Activated CD4-positive, alpha-beta memory T cell treated with anti-CD3 and anti-CD28 coated beads for 36 hours (primary cell): ENCODE measurements at regions of chr1 and their contacts with region 1.

Region 1: DNA sequence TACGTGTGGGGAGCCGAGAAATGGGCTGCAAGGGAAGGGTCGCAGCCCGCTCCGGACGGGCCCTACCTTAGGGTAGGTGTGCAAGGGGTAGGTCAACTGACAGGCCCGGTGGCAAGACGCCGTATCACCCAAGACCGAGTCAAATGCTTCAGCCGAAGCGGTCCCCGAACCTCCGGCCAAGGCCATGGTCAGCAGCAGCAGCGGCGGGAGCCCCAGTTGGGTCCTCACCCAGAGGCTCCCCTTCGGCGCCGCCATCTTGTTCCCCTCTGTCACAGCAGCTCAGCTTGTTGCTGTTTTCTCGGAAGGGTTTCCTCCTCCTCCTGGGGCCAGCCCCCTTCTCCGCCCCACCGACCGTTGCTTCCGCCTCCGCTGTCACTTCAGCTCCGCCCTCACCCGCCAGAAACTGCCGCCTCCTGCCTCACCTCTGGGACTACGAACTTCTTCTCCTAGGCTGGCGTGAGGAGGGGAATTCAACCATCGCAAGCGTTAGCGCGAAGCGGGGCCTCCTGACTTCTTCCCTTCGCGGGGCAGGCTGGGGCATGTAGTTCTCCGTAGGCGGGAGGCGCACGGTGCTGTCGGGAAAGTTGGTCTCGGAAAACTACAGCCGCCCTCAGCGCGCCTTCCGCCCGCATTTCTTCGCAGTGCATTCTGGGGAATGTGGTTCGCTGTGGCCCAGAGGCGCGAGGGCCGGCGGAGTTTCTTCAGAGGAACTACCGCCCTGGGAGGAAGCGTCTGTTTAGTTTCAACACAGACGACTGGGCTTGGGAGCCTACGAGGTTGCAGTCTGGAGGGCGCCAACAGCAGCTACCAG is at the starts of genes TCEANC2 and TMEM59:
- DNase-seq: peak; percentile 99
- H3K4me3 Mint-ChIP-seq: no peak within 1 kb of the TSS
- H3K27ac Mint-ChIP-seq: no peak within 1 kb of the TSS
- H3K4me1 Mint-ChIP-seq: peaks cover 30% of the 10 kb centered on the region
- H3K27me3 Mint-ChIP-seq: no peaks in the 10 kb centered on the region
- total RNA-seq, gene TCEANC2: 12.8 to 13.6 TPM
- total RNA-seq, gene TMEM59: 142 to 149 TPM

Region 2: DNA sequence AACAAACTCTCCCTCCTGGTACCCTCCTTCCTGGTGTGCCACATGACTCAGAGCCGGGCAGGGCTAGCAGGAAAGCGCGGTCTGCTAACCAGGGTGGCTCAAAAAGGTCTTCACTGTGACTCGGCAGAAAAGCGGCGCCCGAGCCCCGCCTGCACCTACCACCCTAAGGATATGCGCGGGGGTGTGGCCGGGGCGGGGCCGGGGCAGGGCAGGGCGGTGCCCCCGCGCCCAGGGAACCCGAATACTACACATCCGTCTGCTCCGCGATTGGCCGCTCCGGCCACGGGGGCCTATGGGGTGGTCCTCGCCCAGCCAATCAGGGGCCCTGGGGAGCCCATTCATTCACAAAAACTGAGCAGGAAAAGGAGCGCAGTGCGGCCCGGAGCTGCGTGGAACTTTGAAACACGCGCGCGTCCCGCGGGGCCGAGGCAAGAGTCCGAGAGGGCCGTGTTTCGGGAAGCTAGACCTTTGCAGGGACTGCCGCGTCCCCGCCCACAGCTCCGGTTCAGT is 727.0 kb before region 1 on chr1:
- CTCF ChIA-PET with region 1: no interaction called
- POLR2A ChIA-PET with region 1: no interaction called
- intact Hi-C with region 1: loop called (anchors 2 kb)
- DNase-seq: peak; percentile 98
- H3K4me3 Mint-ChIP-seq: peak overlapping the region; percentile 95
- H3K27ac Mint-ChIP-seq: peak overlapping the region; percentile 97
- H3K4me1 Mint-ChIP-seq: peaks cover 23% of the 10 kb centered on the region
- H3K27me3 Mint-ChIP-seq: no peaks in the 10 kb centered on the region

Region 3: DNA sequence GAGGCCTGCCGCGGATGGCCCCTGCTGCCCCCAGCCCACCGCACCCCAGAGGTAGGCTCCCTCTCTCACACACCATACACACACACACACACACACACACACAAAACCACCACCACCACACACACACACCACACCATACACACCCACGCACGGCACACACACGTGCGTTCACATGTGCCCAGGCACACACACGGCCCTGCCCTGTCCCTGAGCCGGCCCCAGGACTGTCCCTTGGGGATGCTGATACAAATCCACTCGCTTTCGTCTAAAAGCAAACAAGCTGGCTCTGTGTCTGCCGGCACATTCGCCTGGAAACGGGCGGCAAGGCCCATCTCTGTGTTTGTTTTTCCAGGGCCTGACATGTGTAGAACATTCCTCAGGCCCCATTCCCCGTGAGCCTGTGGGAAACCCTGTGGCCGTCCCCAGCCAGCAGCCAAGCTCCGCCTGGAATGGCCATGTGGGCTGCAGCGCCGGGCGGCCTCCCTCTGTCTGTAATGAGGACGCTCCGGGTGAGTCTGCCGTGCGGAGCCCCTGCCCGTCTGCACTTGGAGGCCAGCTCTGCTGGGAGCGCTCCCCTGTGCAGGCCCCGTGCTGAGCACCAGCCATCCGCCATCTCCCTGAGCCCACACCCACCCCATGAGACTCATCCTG is 526.6 kb before region 1 on chr1:
- CTCF ChIA-PET with region 1: no interaction called
- POLR2A ChIA-PET with region 1: no interaction called
- intact Hi-C with region 1: no loop called
- DNase-seq: no peak
- H3K4me3 Mint-ChIP-seq: no peak overlapping the region
- H3K27ac Mint-ChIP-seq: no peak overlapping the region
- H3K4me1 Mint-ChIP-seq: no peaks in the 10 kb centered on the region
- H3K27me3 Mint-ChIP-seq: peaks cover 4% of the 10 kb centered on the region

Region 4: GRCh38 chr1:53889304-53890298 is 163.5 kb before region 1 on chr1 and contains the start of gene YIPF1:
- CTCF ChIA-PET with region 1: no interaction called
- POLR2A ChIA-PET with region 1: no interaction called
- intact Hi-C with region 1: loop called (anchors 1 kb)
- DNase-seq: peak; percentile 93
- H3K4me3 Mint-ChIP-seq: peak within 1 kb of the TSS; percentile 96
- H3K27ac Mint-ChIP-seq: peak within 1 kb of the TSS; percentile 99
- H3K4me1 Mint-ChIP-seq: peaks cover 29% of the 10 kb centered on the region
- H3K27me3 Mint-ChIP-seq: no peaks in the 10 kb centered on the region
- total RNA-seq, gene YIPF1: 17.3 to 19.1 TPM

Region 5: GRCh38 chr1:54081306-54082270 is 28.4 kb after region 1 on chr1:
- CTCF ChIA-PET with region 1: interaction called, 12 read pairs
- POLR2A ChIA-PET with region 1: no interaction called
- intact Hi-C with region 1: no loop called
- DNase-seq: peak; percentile 77
- H3K4me3 Mint-ChIP-seq: no peak overlapping the region
- H3K27ac Mint-ChIP-seq: no peak overlapping the region
- H3K4me1 Mint-ChIP-seq: peaks cover 5% of the 10 kb centered on the region
- H3K27me3 Mint-ChIP-seq: no peaks in the 10 kb centered on the region

Region 6: DNA sequence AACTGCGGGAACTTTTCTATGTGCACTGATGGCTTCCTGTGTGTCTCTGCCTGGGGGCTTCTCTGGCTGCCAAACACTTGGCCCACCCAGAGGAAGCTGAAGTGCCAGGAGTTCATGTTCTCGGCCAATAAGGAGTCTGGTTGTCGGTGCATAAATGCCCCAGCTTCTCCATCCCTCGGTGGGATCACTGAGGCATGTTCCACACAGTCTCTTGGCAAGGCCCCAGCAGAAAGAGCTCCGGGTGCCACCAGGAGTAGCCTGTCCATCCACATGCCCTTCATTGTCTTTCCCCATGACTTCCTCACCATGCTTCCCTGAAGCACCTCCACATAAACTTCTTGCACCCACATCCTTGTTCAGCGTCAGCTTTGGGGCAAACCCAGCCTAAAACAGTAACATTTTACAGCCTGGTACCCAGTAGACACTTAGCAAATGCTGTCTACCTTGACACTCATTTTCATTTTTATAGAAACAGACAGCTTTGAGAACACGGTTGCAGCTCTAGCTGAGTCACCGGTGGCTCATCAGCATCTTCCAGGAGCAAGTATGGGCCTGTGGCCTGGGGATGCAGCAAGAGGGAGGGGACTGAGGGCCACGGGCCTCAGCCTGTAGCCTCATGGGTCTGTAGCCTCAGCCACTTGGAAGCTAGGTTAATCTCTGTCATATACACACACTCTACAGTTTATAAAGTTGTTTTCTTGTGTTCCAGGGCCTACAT is 114.4 kb after region 1 on chr1:
- CTCF ChIA-PET with region 1: no interaction called
- POLR2A ChIA-PET with region 1: no interaction called
- intact Hi-C with region 1: no loop called
- DNase-seq: no peak
- H3K4me3 Mint-ChIP-seq: no peak overlapping the region
- H3K27ac Mint-ChIP-seq: no peak overlapping the region
- H3K4me1 Mint-ChIP-seq: peaks cover 11% of the 10 kb centered on the region
- H3K27me3 Mint-ChIP-seq: no peaks in the 10 kb centered on the region

Region 7: DNA sequence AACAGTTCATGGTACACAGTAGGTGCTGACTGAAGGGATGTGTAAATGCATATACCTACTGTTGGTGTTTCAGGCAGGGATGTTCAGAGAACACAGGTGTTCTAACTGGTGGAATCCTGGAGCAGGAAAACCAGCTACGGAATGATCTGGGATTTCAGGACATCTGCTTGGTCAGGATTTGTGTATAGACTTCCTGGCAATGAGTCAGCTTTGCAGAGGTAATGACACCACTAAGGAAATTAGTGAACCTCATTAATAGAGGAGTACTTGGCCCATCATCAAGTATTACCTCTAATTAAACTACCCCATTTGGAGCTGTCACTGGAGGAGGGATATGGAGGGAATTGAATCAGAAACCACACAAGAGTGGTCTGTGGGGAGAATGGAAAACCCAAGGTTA is 154.1 kb after region 1 on chr1:
- CTCF ChIA-PET with region 1: no interaction called
- POLR2A ChIA-PET with region 1: no interaction called
- intact Hi-C with region 1: no loop called
- DNase-seq: no peak
- H3K4me3 Mint-ChIP-seq: no peak overlapping the region
- H3K27ac Mint-ChIP-seq: no peak overlapping the region
- H3K4me1 Mint-ChIP-seq: peaks cover 5% of the 10 kb centered on the region
- H3K27me3 Mint-ChIP-seq: no peaks in the 10 kb centered on the region

Region 8: DNA sequence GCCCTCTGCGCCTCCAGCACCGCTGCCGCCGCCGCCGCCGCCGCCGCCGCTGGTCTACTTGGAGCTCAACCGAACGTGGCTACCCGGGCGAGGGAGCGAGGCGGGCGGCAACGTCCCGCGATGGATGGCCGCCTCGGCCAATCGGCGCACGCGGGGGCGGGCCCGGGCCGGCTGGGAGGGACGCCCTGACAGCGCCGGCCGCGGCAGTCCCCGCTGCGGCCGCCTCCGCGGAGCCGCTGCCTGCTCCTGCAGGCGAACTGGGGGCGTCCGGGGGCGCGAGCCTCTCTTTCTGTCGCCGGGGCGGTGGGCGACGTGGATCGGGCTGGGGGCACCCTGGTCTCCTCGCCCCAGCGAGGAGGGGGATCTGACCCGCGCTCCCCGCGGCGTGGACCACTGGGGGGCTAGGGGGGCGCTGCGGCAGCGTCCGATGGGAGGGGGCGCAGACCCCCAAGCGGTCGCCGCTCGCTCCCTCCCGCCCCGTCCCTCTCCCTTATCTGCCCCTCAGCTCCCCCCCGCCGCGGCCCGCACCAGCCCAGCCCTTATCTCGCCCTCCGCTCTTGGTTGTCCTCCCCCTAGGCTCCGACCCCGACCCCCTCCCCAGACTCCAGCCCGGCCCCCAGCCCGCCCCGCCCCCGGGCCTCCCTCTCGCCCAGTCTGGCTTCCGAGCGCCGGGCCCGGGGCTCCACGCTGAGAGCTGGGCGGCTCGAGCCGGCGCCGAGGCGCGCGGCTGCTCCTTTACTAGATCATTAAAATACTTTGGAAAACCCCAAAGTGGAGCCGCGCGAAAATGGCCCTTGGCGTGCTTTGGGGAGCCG is 353.4 kb after region 1 on chr1 and contains the start of gene SSBP3:
- CTCF ChIA-PET with region 1: no interaction called
- POLR2A ChIA-PET with region 1: interaction called, 4 read pairs
- intact Hi-C with region 1: loop called (anchors 1 kb)
- DNase-seq: peak; percentile 93
- H3K4me3 Mint-ChIP-seq: peak within 1 kb of the TSS; percentile 84
- H3K27ac Mint-ChIP-seq: peak within 1 kb of the TSS; percentile 92
- H3K4me1 Mint-ChIP-seq: peaks cover 63% of the 10 kb centered on the region
- H3K27me3 Mint-ChIP-seq: no peaks in the 10 kb centered on the region
- total RNA-seq, gene SSBP3: 44.4 to 49.6 TPM

Region 9: DNA sequence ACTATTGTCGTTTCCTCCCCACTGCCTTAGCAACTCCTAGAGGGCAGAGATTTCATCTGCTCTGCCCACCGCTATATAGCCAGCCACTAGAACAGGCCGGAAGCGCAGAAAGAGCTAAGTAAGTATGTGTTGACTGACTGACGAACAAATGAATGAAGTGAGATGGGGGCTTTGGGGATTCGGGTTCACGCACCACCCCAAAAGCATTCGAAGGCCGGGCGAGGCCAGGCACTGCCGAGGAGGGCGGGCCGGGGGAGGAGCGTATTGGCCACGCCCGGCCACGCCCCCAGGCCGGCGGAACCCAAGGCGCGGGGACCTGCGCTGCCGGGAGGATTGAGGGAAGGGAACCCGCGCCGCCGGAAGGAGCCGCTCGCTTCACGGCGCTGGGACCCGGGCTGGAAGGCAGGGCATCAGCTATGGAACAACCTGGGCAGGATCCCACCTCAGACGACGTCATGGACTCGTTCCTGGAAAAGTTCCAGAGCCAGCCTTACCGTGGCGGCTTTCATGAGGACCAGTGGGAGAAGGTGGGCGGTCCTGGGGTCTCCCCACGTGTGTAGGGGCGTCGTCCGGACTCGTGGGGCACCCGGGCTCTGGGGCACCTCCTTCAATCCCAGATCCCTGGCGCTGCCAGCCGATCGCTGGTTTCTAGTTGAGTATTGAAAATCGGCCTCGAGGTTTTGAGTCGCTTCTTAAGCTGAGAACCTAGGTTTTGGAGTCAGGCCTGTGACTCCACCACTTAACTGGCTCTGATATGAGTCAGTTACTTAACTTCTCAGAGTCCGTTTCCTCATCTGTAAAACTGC is 662.6 kb after region 1 on chr1 and contains the start of gene TTC4:
- CTCF ChIA-PET with region 1: no interaction called
- POLR2A ChIA-PET with region 1: interaction called, 4 read pairs
- intact Hi-C with region 1: loop called (anchors 1 kb)
- DNase-seq: peak; percentile 87
- H3K4me3 Mint-ChIP-seq: peak within 1 kb of the TSS; percentile 82
- H3K27ac Mint-ChIP-seq: peak within 1 kb of the TSS; percentile 92
- H3K4me1 Mint-ChIP-seq: peaks cover 30% of the 10 kb centered on the region
- H3K27me3 Mint-ChIP-seq: no peaks in the 10 kb centered on the region
- total RNA-seq, gene TTC4: 32.7 to 33.5 TPM

Region 10: GRCh38 chr1:54800899-54801759 is 748.0 kb after region 1 on chr1 and contains the start of gene TTC22:
- CTCF ChIA-PET with region 1: interaction called, 4 read pairs
- POLR2A ChIA-PET with region 1: no interaction called
- intact Hi-C with region 1: loop called (anchors 1 kb)
- DNase-seq: peak; percentile 86
- H3K4me3 Mint-ChIP-seq: peak within 1 kb of the TSS; percentile 84
- H3K27ac Mint-ChIP-seq: peak within 1 kb of the TSS; percentile 67
- H3K4me1 Mint-ChIP-seq: peaks cover 56% of the 10 kb centered on the region
- H3K27me3 Mint-ChIP-seq: no peaks in the 10 kb centered on the region
- total RNA-seq, gene TTC22: 4.6 to 5.3 TPM